Head of caudate nucleus (tissue), 42 donors: ENCODE measurements at regions of chr5 and their contacts with region 1.

Region 1: GRCh38 chr5:62779010-62779422 is 200.4 kb downstream of the LRRC70 start:
- DNase-seq: peak in 18 of 42 donors; percentile 4 to 68 (median 26)

Region 2: DNA sequence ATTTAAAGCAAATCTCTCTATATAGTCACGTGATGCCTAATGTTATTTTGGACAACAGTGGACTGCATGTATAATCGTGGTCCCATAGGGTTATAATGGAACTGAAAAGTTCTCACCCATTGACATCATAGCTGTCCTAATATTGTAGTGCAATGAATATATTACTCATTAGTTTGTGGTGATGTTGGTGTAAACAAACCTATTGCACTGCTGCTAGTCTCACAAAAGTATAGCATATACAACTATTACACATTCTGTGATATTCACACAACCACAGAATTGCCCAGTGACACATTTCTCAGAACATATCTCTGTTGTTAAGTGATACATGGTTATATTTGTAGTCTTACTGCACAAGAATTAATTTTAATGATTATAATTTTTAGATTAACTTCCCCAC is 328.8 kb before region 1 on chr5:
- intact Hi-C with region 1: loop called (anchors 5 kb)
- DNase-seq: no peak

Region 3: DNA sequence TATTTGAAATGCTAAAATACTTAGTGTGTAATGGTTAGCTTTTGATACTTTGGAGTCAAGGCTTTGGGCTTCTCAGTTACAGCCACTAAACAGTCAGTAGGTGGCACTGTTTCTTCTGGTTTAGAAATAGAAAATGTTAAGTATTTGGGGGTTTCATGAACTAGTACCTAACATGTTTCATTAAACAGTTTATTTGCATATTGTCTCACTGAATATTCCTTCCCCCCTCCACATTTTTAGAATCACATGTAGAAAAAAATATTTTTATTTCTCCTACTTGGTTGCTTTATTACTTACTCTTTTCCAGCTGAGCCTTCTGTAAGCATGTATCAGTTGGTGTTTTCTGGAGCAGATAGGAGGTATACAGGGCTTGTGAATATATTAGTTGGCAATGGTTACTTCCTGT is 318.4 kb before region 1 on chr5:
- intact Hi-C with region 1: loop called (anchors 5 kb)
- DNase-seq: peak in 5 of 42 donors; percentile 10 to 27 (median 14)

Region 4: DNA sequence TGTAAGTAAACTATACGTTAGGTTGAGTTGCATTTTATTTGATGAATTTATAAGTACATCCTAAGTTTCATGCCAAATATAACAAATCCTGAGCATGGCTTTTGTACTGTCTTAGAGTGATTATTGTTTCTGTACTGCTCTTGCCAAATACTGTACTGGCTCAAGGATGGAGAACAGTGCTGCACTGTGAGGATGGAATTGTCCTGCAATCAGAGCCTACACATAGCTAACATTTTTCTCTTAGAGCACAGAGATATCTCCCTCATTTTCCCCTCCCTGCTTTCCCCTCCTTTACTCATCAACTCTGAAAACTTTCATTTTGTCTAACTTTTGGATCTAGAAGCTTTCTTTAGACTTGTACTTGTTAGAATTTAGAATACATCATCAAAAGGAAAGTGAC is 172.1 kb before region 1 on chr5:
- intact Hi-C with region 1: no loop called
- DNase-seq: no peak